ENCODE measurements at regions of chr2 and their contacts with region 1.

Region 1: DNA sequence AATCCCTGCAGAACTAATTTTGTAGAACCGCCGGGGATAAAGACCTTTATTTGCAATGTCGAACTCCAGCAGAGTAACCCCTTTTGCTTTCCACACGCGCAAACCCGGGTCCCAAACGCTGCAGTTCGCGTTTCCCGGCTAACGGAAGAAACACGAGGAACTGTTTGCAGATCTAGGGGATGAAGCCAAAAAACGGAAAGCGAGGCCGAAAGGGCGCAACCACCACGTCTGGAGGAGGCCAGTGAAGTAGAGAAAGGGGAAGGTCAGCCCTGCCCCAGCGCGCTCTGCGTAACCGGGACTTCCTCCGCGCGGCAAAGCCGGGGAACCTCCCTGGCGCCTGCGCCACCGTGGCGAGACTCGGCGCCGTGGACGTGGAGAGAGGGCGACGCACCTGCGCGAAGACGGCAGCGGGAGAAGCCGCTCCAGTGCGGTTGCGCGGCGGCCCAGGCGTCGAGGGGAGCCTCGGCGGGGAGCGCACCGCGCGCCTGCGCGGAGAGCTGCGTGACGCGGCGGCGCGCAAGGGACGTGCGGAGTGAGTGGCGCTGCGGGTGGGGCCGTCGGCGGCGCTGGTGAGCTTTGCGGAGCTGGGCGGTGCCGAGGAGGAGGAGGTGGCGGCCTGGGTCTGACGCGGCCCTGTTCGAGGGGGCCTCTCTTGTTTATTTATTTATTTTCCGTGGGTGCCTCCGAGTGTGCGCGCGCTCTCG is at the start of gene PPP1CB:
- DNase-seq: peak; percentile 97
- H3K4me3 Mint-ChIP-seq: peak within 1 kb of the TSS; percentile 90
- H3K27ac Mint-ChIP-seq: peak within 1 kb of the TSS; percentile 96
- H3K4me1 Mint-ChIP-seq: peaks cover 44% of the 10 kb centered on the region
- H3K27me3 Mint-ChIP-seq: no peaks in the 10 kb centered on the region
- total RNA-seq, gene PPP1CB: 253 and 272 TPM in 2 replicates

Region 2: GRCh38 chr2:28566521-28567041 is 184.8 kb before region 1 on chr2:
- intact Hi-C with region 1: loop called (anchors 1 kb)
- DNase-seq: peak; percentile 85
- H3K4me3 Mint-ChIP-seq: peak overlapping the region; percentile 87
- H3K27ac Mint-ChIP-seq: peak overlapping the region; percentile 82
- H3K4me1 Mint-ChIP-seq: peaks cover 19% of the 10 kb centered on the region
- H3K27me3 Mint-ChIP-seq: peaks cover 1% of the 10 kb centered on the region

Region 3: GRCh38 chr2:28594289-28595108 is 156.9 kb before region 1 on chr2:
- intact Hi-C with region 1: loop called (anchors 1 kb)
- DNase-seq: peak; percentile 73
- H3K4me3 Mint-ChIP-seq: peak overlapping the region; percentile 11
- H3K27ac Mint-ChIP-seq: peak overlapping the region; percentile 79
- H3K4me1 Mint-ChIP-seq: peaks cover 18% of the 10 kb centered on the region
- H3K27me3 Mint-ChIP-seq: no peaks in the 10 kb centered on the region

Region 4: GRCh38 chr2:28615706-28616105 is 135.7 kb before region 1 on chr2:
- intact Hi-C with region 1: loop called (anchors 1 kb)
- DNase-seq: no peak
- H3K4me3 Mint-ChIP-seq: no peak overlapping the region
- H3K27ac Mint-ChIP-seq: no peak overlapping the region
- H3K4me1 Mint-ChIP-seq: peaks cover 48% of the 10 kb centered on the region
- H3K27me3 Mint-ChIP-seq: no peaks in the 10 kb centered on the region

Region 5: GRCh38 chr2:28681158-28681571 is 70.2 kb before region 1 on chr2:
- intact Hi-C with region 1: loop called (anchors 1 kb)
- DNase-seq: peak; percentile 45
- H3K4me3 Mint-ChIP-seq: peak overlapping the region; percentile 39
- H3K27ac Mint-ChIP-seq: peak overlapping the region; percentile 95
- H3K4me1 Mint-ChIP-seq: peaks cover 61% of the 10 kb centered on the region
- H3K27me3 Mint-ChIP-seq: no peaks in the 10 kb centered on the region

Region 6: DNA sequence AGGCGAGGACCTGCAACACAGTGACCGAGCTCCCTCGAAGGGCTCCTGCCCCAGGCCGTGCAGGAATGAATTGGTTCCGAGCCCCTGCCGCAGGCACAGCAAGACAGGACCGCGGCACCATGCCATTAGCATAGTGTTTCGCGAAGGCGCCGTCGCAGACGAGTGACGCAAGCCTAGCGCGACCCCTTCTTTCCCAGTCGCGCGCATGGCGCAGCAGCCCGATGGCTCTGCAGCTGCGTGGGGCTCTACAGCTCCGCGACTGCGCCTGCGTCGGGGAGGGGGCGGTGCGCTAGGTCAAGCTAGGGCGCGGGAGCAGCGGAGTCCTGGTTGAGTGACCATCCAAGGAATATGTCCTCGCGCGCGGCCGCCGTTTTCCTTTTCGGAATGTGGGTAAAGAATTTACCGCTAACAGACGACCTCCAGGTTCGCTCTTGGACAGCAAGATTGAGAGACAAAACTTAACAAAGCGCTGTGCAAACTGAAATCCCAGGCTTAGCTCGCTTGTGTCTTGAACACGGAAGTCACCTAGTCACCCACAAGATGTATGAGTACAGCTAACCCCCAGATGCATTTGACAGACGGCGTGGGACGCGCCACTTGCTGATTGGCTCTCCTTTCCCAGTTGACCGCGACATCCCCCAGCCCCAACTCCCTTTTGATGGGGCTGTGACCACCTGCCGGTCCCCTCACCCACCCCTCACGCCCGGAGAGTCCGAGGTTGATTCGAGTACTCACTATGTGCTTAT is 118.9 kb after region 1 on chr2 and contains the start of gene TRMT61B:
- intact Hi-C with region 1: loop called (anchors 2 kb)
- DNase-seq: peak; percentile 96
- H3K4me3 Mint-ChIP-seq: peak within 1 kb of the TSS; percentile 96
- H3K27ac Mint-ChIP-seq: peak within 1 kb of the TSS; percentile 91
- H3K4me1 Mint-ChIP-seq: peaks cover 19% of the 10 kb centered on the region
- H3K27me3 Mint-ChIP-seq: peaks cover 5% of the 10 kb centered on the region
- total RNA-seq, gene TRMT61B: 15.1 and 17.3 TPM in 2 replicates